Naive thymus-derived CD4-positive, alpha-beta T cell (primary cell): ENCODE measurements at regions of chr7 and their contacts with region 1.

Region 1: DNA sequence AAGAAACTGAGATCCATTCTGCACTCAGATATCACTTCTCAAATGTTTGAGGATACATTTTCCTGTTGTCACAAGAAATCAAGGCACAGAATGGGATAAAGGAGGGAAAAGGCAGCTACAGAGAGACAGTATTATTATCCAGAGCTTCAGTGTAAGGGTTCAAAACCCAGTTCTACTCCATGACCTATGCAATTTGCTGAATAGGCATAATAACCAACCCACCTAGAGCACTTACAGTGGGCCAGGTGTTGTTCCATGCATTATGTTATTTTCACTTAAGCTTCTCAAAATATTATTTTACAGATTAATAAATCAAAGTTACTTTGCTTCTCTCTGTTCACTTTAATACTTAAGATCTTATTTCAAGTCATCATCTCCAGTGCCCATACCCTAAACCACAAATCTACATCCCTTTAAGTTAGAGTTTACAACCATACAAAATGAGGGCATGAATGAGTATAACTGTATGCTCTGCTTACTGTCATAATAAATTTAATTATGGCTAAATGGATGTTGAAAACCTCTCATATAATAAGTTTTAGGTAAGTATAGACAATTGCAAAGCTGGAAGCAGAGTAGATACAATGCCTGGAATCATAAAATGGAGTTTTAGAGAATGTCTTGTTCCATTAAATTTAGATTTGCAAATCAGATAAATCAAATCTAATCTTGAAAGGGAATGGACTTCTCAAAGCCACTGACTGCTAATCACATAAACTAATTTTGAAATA is 28.1 kb upstream of the PCLO start:
- DNase-seq: no peak
- ATAC-seq: no peak
- H3K4me3 ChIP-seq: no peak overlapping the region
- H3K4me3 Mint-ChIP-seq: no peak overlapping the region
- H3K27ac ChIP-seq: no peak overlapping the region
- H3K27ac Mint-ChIP-seq: no peak overlapping the region
- H3K4me1 ChIP-seq: no peaks in the 10 kb centered on the region
- H3K4me1 Mint-ChIP-seq: no peaks in the 10 kb centered on the region
- H3K27me3 ChIP-seq: no peaks in the 10 kb centered on the region
- H3K27me3 Mint-ChIP-seq: no peaks in the 10 kb centered on the region

Region 2: DNA sequence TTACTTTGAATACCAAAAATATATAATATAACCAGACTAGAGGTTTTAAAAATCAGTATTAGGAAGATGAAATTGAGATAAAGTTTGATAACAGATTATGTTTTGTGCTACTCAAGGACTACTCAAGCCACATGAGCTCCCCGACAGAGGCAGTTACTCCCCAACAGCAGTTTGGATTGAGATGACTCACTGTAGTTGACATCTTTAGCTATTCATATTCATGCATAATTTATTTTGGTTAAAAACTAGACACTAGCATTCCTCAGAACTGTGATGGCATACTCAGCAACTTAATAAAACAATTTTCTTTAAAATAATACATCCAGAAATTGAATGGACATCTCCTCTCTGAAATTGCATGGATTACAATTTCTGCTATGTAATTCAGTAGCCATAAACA is 47.7 kb before region 1 on chr7:
- CTCF ChIA-PET with region 1: no interaction called
- POLR2A ChIA-PET with region 1: no interaction called
- intact Hi-C with region 1: loop called in 1 of 2 experiments (anchors 5 kb)
- DNase-seq: no peak
- ATAC-seq: no peak
- H3K4me3 ChIP-seq: no peak overlapping the region
- H3K4me3 Mint-ChIP-seq: no peak overlapping the region
- H3K27ac ChIP-seq: no peak overlapping the region
- H3K27ac Mint-ChIP-seq: no peak overlapping the region
- H3K4me1 ChIP-seq: no peaks in the 10 kb centered on the region
- H3K4me1 Mint-ChIP-seq: no peaks in the 10 kb centered on the region
- H3K27me3 ChIP-seq: no peaks in the 10 kb centered on the region
- H3K27me3 Mint-ChIP-seq: no peaks in the 10 kb centered on the region